ENCODE measurements at regions of chr1 and their contacts with region 1.

Region 1: GRCh38 chr1:31866450-31867032 is 50.7 kb upstream of the SPOCD1 start:
- DNase-seq: no peak
- ATAC-seq: no peak
- H3K4me3 ChIP-seq: no peak overlapping the region
- H3K27ac ChIP-seq: no peak overlapping the region
- H3K4me1 ChIP-seq: no peaks in the 10 kb centered on the region
- H3K27me3 ChIP-seq: no peaks in the 10 kb centered on the region
- CTCF ChIP-seq: no peak

Region 2: DNA sequence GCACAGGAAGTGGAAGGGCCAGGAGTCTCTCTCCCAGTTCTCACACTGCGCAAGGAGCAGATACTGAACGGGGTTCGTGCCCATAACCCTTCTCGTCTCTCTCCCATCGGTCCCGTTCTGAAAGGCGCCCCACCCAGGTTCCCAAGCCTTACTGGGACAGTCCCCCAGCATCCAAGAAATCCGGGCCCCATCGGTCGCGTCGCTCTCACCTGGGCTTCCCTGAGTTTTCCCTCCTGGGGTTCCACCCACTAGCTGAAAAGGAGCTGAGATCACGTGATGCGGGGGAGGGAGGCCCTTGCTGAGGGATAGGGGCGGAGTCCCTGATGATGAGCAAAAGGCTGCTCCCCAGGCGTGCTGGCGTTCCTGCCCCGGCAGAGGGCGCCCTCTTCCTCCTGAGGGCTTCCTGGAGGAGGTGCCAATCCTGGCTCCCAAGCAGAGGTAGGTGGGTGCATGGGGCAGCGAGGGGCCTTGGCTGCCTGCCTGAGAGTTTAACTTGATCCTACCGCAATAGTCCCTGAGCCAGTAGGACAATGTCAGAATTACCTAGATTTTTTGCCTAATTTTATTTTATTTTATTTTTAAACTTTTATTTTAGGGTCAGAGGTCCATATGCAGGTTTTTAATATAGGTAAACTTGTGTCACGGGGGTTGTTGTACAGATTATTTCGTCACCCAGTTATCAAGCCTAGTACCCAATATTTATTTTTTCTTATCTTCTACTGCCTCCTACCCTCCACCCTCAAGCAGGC is 50.6 kb before region 1 on chr1 and contains the start of gene SPOCD1:
- CTCF ChIA-PET with region 1: no interaction called
- POLR2A ChIA-PET with region 1: interaction called, 17 read pairs
- in situ Hi-C with region 1: no loop called
- intact Hi-C with region 1: no loop called
- DNase-seq: no peak
- ATAC-seq: peak; percentile 46; the same call in 1 of the 2 replicates
- H3K4me3 ChIP-seq: no peak within 1 kb of the TSS
- H3K27ac ChIP-seq: no peak within 1 kb of the TSS
- H3K4me1 ChIP-seq: no peaks in the 10 kb centered on the region
- H3K27me3 ChIP-seq: no peaks in the 10 kb centered on the region
- CTCF ChIP-seq: peak; percentile 83
- total RNA-seq, gene SPOCD1: 0.54 TPM